Activated T-helper 2 cell treated with anti-CD3 and anti-CD28 coated beads, Interferon-gamma antibody, Interleukin-2, Interleukin-4, amounts not matched to agents 10 μg/mL and 5 μg/mL and 100 μg/mL, durations not matched to agents 14 hours and 24 hours and 36 hours (primary cell): ENCODE measurements at regions of chr10 and their contacts with region 1.

Region 1: GRCh38 chr10:110425684-110426293 is 71.9 kb upstream of the DUSP5 start:
- DNase-seq: peak; percentile 34
- H3K4me3 Mint-ChIP-seq: peak overlapping the region; percentile 28
- H3K27ac Mint-ChIP-seq: peak overlapping the region; percentile 85
- H3K4me1 Mint-ChIP-seq: peaks cover 60% of the 10 kb centered on the region
- H3K27me3 Mint-ChIP-seq: no peaks in the 10 kb centered on the region

Region 2: GRCh38 chr10:110311357-110311949 is 114.3 kb before region 1 on chr10:
- intact Hi-C with region 1: loop called (anchors 2 kb)
- DNase-seq: no peak
- H3K4me3 Mint-ChIP-seq: no peak overlapping the region
- H3K27ac Mint-ChIP-seq: no peak overlapping the region
- H3K4me1 Mint-ChIP-seq: peaks cover 33% of the 10 kb centered on the region
- H3K27me3 Mint-ChIP-seq: no peaks in the 10 kb centered on the region

Region 3: GRCh38 chr10:110363572-110364411 is 62.0 kb before region 1 on chr10:
- intact Hi-C with region 1: loop called (anchors 2 kb)
- DNase-seq: no peak
- H3K4me3 Mint-ChIP-seq: no peak overlapping the region
- H3K27ac Mint-ChIP-seq: peak overlapping the region; percentile 94
- H3K4me1 Mint-ChIP-seq: peaks cover 73% of the 10 kb centered on the region
- H3K27me3 Mint-ChIP-seq: no peaks in the 10 kb centered on the region

Region 4: GRCh38 chr10:110376021-110376766 is 49.6 kb before region 1 on chr10:
- intact Hi-C with region 1: no loop called
- DNase-seq: no peak
- H3K4me3 Mint-ChIP-seq: no peak overlapping the region
- H3K27ac Mint-ChIP-seq: peak overlapping the region; percentile 43
- H3K4me1 Mint-ChIP-seq: peaks cover 31% of the 10 kb centered on the region
- H3K27me3 Mint-ChIP-seq: peaks cover 2% of the 10 kb centered on the region

Region 5: GRCh38 chr10:110414563-110415309 is 11.1 kb before region 1 on chr10:
- intact Hi-C with region 1: loop called (anchors 1 kb)
- DNase-seq: peak; percentile 84
- H3K4me3 Mint-ChIP-seq: peak overlapping the region; percentile 61
- H3K27ac Mint-ChIP-seq: peak overlapping the region; percentile 90
- H3K4me1 Mint-ChIP-seq: peaks cover 70% of the 10 kb centered on the region
- H3K27me3 Mint-ChIP-seq: no peaks in the 10 kb centered on the region

Region 6: DNA sequence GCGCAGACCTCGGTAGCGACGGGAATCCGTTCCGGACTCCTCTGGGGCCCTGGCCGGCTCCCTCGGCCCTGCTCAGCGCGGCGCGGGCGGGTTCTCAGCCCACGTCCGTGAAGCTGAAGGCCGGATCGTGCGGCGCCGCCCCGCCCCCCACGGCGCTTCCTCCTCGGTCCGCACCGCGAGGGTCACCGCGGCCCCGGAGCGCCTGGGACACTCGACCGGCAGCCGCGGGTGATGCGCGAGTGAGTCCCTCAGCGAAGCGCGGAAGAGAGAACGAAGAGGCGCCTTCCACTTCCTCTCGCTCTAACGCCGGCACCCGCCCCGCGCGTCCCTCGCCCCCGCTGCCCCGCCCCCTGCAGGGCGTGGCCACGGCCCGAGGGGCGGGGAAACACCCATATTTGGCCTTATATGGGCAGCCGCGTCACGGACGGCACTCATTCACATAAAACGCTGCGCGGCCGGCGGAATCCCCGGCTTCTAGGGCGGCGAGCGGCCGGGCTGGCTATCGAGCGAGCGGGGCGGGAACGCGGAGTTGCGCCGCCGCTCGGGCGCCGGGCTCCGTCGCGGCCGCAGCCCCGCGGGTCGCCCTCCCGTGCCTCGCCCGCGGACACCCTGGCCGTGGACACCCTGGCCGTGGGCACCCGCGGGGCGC is 71.8 kb after region 1 on chr10 and contains the start of gene DUSP5:
- intact Hi-C with region 1: loop called (anchors 1 kb)
- DNase-seq: peak; percentile 95
- H3K4me3 Mint-ChIP-seq: peak within 1 kb of the TSS; percentile 97
- H3K27ac Mint-ChIP-seq: peak within 1 kb of the TSS; percentile 84
- H3K4me1 Mint-ChIP-seq: peaks cover 47% of the 10 kb centered on the region
- H3K27me3 Mint-ChIP-seq: no peaks in the 10 kb centered on the region
- total RNA-seq, gene DUSP5: 84.3 and 86.2 TPM in 2 replicates

Region 7: GRCh38 chr10:110535958-110536891 is 110.4 kb after region 1 on chr10:
- intact Hi-C with region 1: loop called (anchors 1 kb)
- DNase-seq: peak; percentile 42
- H3K4me3 Mint-ChIP-seq: peak overlapping the region; percentile 27
- H3K27ac Mint-ChIP-seq: peak overlapping the region; percentile 92
- H3K4me1 Mint-ChIP-seq: peaks cover 55% of the 10 kb centered on the region
- H3K27me3 Mint-ChIP-seq: no peaks in the 10 kb centered on the region